Left cardiac atrium (tissue), 4 donors: ENCODE measurements at regions of chr11 and their contacts with region 1.

Region 1: DNA sequence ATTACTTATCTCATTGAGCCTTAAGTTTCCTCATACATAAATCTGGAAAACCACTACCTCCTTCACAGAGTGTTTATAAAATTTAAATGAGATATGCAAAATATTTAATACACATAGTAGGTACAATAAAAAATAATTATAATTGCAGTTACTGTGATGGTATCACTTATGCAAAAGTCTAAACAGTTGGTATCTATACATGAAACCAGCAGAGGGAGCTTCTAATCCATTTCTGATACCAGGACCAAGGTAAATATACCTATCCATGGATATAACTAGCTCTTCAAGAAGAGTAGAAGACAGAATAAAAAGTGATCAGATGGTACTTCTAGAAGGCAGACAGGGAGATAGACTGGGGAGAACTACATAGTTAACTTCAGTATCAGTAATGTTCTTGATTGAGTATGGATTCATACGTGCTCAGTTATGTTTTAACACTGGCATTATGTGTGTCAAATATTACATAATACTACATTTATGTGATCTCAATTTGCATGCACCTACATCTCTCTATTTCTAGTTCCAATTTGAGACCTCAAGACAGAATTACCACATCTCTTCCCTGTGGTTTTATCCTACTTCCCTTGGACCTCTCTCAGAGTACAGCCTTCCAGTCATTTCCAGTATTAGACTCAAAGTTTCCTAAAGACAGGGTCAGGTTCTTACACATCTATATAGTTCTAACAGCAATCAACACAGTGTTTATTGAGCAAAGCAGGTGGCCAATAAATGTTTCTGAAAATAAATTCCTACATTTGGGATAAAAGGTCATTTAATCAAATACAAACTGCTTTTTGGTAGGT is 13.7 kb upstream of the TSG101 start:
- DNase-seq: no peak
- ATAC-seq: peak in 1 of 2 donors; percentile 38

Region 2: DNA sequence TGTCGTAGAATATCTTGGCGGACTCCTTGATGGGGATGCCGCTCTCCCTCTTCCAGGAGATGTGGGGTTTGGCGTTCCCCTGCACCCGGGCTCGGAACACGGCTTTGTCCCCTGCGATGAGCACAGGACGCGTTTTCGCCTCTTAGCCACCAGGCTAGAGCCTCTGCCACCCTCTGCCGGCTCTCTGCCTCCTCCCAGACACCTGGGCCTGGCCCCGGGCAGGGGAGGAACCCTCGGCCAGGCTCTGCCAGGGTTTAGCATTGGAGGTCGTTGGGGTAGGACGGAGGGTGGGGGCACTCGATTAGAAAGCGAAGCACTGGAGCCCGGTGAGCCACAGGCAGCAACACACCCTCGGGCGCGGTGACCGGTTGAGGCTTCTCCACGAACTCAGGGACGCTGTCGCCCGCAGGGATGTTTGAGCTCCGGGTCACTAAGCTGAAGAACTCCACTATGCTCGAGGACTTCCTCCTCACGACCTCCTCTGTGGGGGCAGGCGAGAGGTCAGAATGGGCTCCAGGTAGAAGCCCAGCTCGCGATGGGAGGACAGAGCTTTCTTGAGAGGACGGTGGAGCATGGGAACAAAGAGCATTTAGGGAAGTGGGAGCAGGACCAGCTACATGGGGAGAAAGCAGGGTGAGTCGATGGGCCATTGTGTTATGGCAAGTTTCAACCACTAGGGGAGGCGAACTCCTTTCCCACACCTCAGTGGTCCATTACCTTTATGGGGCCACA is 181.3 kb after region 1 on chr11:
- intact Hi-C with region 1: loop called in 1 of 2 experiments (anchors 10 kb)
- DNase-seq: no peak
- ATAC-seq: peak; percentile 78 to 80

Region 3: GRCh38 chr11:18731949-18732821 is 191.8 kb after region 1 on chr11:
- intact Hi-C with region 1: loop called (anchors 10 kb)
- DNase-seq: peak; percentile 43
- ATAC-seq: peak; percentile 43 to 76